ENCODE measurements at regions of chr1 and their contacts with region 1.

Region 1: GRCh38 chr1:9671377-9672140 is 20.0 kb downstream of the PIK3CD start:
- DNase-seq: no peak
- H3K4me3 ChIP-seq: no peak overlapping the region
- H3K4me3 Mint-ChIP-seq: peak overlapping the region in 3 of 7 donors; percentile 4 to 48 (median 28)
- H3K27ac ChIP-seq: no peak overlapping the region
- H3K27ac Mint-ChIP-seq: peak overlapping the region in 6 of 8 donors; percentile 30 to 85 (median 79)
- H3K4me1 ChIP-seq: peaks cover 55% of the 10 kb centered on the region
- H3K4me1 Mint-ChIP-seq: peaks cover 58 to 83% (median 67%) of the 10 kb centered on the region in 3 donors
- H3K27me3 ChIP-seq: no peaks in the 10 kb centered on the region
- H3K27me3 Mint-ChIP-seq: peaks cover 0 to 2% of the 10 kb centered on the region in 2 donors

Region 2: GRCh38 chr1:9658199-9658598 is 13.4 kb before region 1 on chr1:
- CTCF ChIA-PET with region 1: interaction called, 35 read pairs
- POLR2A ChIA-PET with region 1: interaction called, 18 read pairs
- DNase-seq: peak in 1 of 5 donors; percentile 38
- H3K4me3 ChIP-seq: peak overlapping the region; percentile 18
- H3K4me3 Mint-ChIP-seq: peak overlapping the region; percentile 54 to 80 (median 71)
- H3K27ac ChIP-seq: peak overlapping the region; percentile 60
- H3K27ac Mint-ChIP-seq: peak overlapping the region; percentile 78 to 97 (median 90)
- H3K4me1 ChIP-seq: peaks cover 66% of the 10 kb centered on the region
- H3K4me1 Mint-ChIP-seq: peaks cover 74 to 92% (median 83%) of the 10 kb centered on the region in 3 donors
- H3K27me3 ChIP-seq: no peaks in the 10 kb centered on the region
- H3K27me3 Mint-ChIP-seq: no peaks in the 10 kb centered on the region

Measured in CD8-positive, alpha-beta memory T cell (primary cell).